Psoas muscle (tissue), 8 donors: ENCODE measurements at regions of chr4 and their contacts with region 1.

Region 1: GRCh38 chr4:184384056-184384809 is 90.1 kb downstream of the IRF2 start:
- DNase-seq: no peak
- ATAC-seq: peak; percentile 48 to 60 (median 58)
- H3K4me3 ChIP-seq: peak overlapping the region; percentile 42
- H3K27ac ChIP-seq: peak overlapping the region; percentile 82
- H3K4me1 ChIP-seq: peaks cover 62% of the 10 kb centered on the region
- H3K27me3 ChIP-seq: no peaks in the 10 kb centered on the region
- CTCF ChIP-seq: no peak

Region 2: DNA sequence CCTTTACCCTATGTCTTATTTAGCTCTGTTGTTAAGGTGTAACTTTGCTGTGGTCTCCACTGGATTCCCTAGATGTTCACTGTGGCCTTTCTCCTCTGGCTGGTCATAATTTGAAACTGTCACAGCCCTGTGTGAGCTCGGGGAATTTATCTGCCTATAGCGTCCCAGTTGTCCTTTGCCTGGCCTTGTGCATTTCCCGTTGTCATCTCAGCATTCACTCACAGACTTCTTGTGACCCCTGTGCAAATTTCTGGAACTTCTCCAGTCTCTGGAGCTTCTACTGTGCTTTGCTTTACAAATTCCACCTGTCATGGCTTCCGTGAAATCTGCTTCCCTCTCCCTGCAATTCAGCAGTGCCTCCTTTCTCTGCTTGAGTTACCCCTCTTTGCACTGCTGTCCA is 1178.5 kb before region 1 on chr4:
- intact Hi-C with region 1: no loop called
- DNase-seq: no peak
- ATAC-seq: no peak
- H3K4me3 ChIP-seq: no peak overlapping the region
- H3K27ac ChIP-seq: no peak overlapping the region
- H3K4me1 ChIP-seq: no peaks in the 10 kb centered on the region
- H3K27me3 ChIP-seq: no peaks in the 10 kb centered on the region
- CTCF ChIP-seq: no peak

Region 3: DNA sequence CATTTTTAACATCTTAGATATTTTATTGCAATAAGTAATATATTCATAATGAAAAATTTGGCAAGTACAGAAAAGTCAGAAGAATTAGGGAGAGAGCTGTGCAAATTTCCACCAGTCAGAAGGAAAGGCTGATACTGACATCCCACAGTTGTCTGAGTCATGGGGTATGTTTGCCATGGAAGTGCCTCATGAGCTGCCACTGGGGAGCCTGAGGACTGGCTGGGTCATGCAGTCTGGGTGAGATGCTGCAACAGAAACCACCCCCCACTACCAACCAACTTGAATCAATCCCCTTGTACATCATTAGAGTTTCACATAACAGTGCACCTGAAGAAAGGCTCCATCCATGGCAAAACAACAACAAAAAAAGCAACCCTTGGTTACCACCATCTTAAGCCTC is 121.3 kb before region 1 on chr4:
- intact Hi-C with region 1: no loop called
- DNase-seq: no peak
- ATAC-seq: no peak
- H3K4me3 ChIP-seq: no peak overlapping the region
- H3K27ac ChIP-seq: no peak overlapping the region
- H3K4me1 ChIP-seq: no peaks in the 10 kb centered on the region
- H3K27me3 ChIP-seq: no peaks in the 10 kb centered on the region
- CTCF ChIP-seq: no peak

Region 4: GRCh38 chr4:184343502-184344177 is 40.6 kb before region 1 on chr4:
- intact Hi-C with region 1: loop called (anchors 2 to 5 kb)
- DNase-seq: peak; percentile 62 to 77
- ATAC-seq: peak; percentile 64 to 78 (median 68)
- H3K4me3 ChIP-seq: peak overlapping the region; percentile 68
- H3K27ac ChIP-seq: peak overlapping the region; percentile 94
- H3K4me1 ChIP-seq: peaks cover 46% of the 10 kb centered on the region
- H3K27me3 ChIP-seq: no peaks in the 10 kb centered on the region
- CTCF ChIP-seq: no peak

Region 5: GRCh38 chr4:184395971-184396391 is 11.7 kb after region 1 on chr4:
- intact Hi-C with region 1: loop called in 1 of 2 experiments (anchors 2 kb)
- DNase-seq: peak in 1 of 2 donors; percentile 58
- ATAC-seq: peak in 1 of 4 donors; percentile 18
- H3K4me3 ChIP-seq: no peak overlapping the region
- H3K27ac ChIP-seq: peak overlapping the region; percentile 84
- H3K4me1 ChIP-seq: peaks cover 53% of the 10 kb centered on the region
- H3K27me3 ChIP-seq: no peaks in the 10 kb centered on the region
- CTCF ChIP-seq: no peak